ENCODE measurements at regions of chr5 and their contacts with region 1.

Region 1: DNA sequence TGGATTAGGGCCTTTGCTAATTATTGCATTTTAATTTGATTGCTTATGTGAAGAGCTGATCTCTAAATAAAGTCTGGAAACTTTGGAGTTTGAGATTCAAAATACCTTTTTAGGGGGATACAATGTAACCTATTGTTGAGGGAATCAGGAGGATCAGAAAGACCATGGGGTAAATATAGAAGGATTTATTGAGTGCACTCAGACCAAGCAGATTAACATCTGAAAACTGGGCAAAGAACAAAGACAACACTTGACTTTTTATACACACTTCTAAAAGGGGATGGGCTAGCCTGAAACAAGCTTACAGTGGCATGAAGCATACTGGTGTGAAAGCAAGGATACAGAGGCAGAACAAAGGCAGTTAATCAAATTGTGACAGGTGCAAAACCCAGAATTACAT is 174.3 kb downstream of the MRPS30 start:
- DNase-seq: no peak

Region 2: DNA sequence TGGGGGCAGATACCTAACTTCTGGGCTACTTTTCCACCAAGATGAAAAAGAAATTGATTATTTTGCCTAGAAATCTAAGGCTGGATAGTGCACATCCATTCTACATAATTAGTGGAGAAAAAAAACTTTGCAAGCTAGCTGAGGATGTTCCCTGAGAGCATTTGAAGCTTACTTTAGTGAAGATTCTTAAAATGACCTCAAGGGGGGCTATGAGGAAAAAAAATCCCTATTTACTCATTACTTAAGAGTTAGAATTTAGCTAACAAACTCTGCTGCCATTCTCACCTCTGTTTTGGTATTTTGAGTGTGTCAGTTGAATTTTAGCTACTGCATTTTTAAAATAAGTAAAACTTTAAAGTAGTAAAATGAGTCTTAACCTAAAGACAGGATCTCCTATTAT is 584.6 kb before region 1 on chr5:
- intact Hi-C with region 1: loop called in 1 of 2 experiments (anchors 5 kb)
- DNase-seq: no peak

Measured in posterior vena cava (tissue), 2 donors.